Colonic mucosa (tissue), 4 donors: ENCODE measurements at regions of chr1 and their contacts with region 1.

Region 1: DNA sequence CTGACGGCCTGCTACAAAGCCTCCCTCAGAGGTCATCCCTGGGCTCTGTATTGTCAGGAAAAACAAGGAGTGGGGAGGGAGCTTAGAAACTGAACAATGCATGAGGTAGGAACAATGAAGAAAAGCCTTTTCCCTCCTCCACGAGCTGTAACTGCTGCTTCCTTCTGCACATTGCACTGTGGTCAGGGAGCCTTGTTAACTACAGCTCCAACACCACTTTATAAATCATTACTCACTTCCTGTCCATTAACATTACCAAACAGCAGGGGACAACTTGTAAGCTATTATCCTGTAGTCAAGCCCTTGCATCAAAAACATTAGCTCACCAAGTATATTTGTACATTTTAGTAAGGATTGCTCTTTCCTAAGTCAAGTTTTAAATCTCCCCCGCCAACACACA is 336.0 kb upstream of the NR5A2 start:
- DNase-seq: no peak
- H3K4me3 ChIP-seq: no peak overlapping the region
- H3K27ac ChIP-seq: no peak overlapping the region
- H3K4me1 ChIP-seq: no peaks in the 10 kb centered on the region
- H3K27me3 ChIP-seq: no peaks in the 10 kb centered on the region
- CTCF ChIP-seq: no peak

Region 2: GRCh38 chr1:199463521-199464128 is 227.9 kb before region 1 on chr1:
- intact Hi-C with region 1: no loop called
- DNase-seq: peak; percentile 24
- H3K4me3 ChIP-seq: no peak overlapping the region
- H3K27ac ChIP-seq: no peak overlapping the region
- H3K4me1 ChIP-seq: no peaks in the 10 kb centered on the region
- H3K27me3 ChIP-seq: no peaks in the 10 kb centered on the region
- CTCF ChIP-seq: no peak

Region 3: DNA sequence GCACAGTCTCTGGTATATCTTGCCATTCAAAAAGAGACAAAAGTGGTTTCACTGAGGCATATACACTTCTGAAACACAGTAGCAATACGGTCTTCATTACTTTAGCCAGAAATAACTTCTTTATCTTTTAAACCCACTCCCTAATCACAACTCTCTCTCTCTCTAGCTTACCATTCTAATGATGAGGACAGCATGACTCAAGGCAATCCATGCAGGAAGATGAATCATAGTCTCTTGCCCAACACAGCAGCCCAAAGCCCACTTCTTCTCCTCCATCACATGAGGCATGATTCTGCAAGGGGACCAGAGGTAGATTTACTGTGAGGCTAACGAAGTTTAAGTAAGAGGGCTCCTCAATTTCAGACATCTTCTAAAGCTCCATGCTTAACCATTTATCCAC is 51.0 kb after region 1 on chr1:
- intact Hi-C with region 1: no loop called
- DNase-seq: no peak
- H3K4me3 ChIP-seq: no peak overlapping the region
- H3K27ac ChIP-seq: no peak overlapping the region
- H3K4me1 ChIP-seq: no peaks in the 10 kb centered on the region
- H3K27me3 ChIP-seq: no peaks in the 10 kb centered on the region
- CTCF ChIP-seq: no peak

Region 4: GRCh38 chr1:199948587-199949280 is 257.2 kb after region 1 on chr1:
- intact Hi-C with region 1: loop called (anchors 10 kb)
- DNase-seq: no peak
- H3K4me3 ChIP-seq: no peak overlapping the region
- H3K27ac ChIP-seq: no peak overlapping the region
- H3K4me1 ChIP-seq: no peaks in the 10 kb centered on the region
- H3K27me3 ChIP-seq: no peaks in the 10 kb centered on the region
- CTCF ChIP-seq: no peak